ENCODE measurements at regions of chr18 and their contacts with region 1.

Region 1: GRCh38 chr18:70195852-70196434 is 9.5 kb downstream of the RTTN start:
- DNase-seq: no peak
- H3K4me3 ChIP-seq: no peak overlapping the region
- H3K27me3 ChIP-seq: no peaks in the 10 kb centered on the region
- CTCF ChIP-seq: peak; percentile 81

Region 2: DNA sequence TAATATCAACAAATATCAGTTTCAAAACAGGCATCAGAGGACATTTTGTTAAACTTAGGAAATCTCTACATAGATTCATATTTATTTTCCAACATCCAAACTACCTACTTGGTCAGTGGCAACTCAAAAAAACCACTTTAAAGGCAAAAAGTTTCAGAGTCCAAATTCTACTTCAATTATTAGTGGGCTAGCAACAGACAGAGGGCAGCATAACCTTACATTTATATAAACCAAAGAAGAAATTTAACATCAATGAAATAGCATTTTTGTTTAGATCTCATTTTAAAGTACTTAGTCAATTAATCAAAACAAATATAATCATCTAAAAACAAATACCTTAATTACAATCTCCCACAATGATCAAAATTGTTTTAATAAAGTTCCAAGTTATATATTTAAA is 23.7 kb before region 1 on chr18:
- CTCF ChIA-PET with region 1: interaction called, 18 read pairs
- POLR2A ChIA-PET with region 1: no interaction called
- DNase-seq: no peak
- H3K4me3 ChIP-seq: no peak overlapping the region
- H3K27me3 ChIP-seq: no peaks in the 10 kb centered on the region
- CTCF ChIP-seq: peak; percentile 44

Region 3: DNA sequence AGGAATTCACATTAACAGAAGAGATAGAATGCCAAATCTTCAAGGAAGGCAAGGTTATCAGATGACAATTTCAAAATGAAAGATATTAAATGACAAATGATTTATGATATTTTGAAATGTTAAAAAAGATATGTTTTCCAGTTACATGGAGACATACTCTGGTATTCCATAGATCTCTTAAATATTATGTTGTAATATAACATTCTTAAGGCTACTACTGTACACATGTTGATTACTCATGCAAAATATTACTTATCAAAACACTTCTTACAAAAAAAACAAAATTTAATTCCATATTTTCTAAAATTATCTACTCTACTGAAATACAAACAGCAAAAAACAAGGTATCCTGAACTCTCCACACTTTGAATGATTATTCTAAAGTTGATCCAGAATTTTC is 13.4 kb before region 1 on chr18:
- CTCF ChIA-PET with region 1: interaction called, 17 read pairs
- POLR2A ChIA-PET with region 1: no interaction called
- DNase-seq: no peak
- H3K4me3 ChIP-seq: no peak overlapping the region
- H3K27me3 ChIP-seq: no peaks in the 10 kb centered on the region
- CTCF ChIP-seq: no peak

Region 4: DNA sequence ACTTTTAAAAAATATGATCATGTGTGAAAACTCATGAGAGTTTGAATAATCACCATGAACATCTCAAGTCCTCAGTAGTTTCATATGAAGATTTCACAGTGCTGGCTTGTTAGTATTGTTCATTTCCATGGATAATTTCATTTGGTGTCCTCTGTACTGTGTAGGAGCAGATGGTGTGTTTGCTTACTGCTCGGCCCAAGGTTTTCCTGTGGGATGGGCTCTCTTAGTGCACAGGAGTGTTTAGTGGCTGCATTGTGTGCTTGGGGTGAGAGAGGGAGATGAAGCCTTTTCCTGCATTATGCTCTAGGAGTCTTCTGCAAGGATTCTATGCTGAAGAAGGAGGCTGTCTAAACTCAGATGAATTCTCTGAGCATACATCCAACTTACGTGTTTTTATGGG is 363.5 kb after region 1 on chr18:
- CTCF ChIA-PET with region 1: no interaction called
- POLR2A ChIA-PET with region 1: no interaction called
- DNase-seq: no peak
- H3K4me3 ChIP-seq: no peak overlapping the region
- H3K27me3 ChIP-seq: no peaks in the 10 kb centered on the region
- CTCF ChIP-seq: no peak